ENCODE measurements at regions of chr2 and their contacts with region 1.

Region 1: DNA sequence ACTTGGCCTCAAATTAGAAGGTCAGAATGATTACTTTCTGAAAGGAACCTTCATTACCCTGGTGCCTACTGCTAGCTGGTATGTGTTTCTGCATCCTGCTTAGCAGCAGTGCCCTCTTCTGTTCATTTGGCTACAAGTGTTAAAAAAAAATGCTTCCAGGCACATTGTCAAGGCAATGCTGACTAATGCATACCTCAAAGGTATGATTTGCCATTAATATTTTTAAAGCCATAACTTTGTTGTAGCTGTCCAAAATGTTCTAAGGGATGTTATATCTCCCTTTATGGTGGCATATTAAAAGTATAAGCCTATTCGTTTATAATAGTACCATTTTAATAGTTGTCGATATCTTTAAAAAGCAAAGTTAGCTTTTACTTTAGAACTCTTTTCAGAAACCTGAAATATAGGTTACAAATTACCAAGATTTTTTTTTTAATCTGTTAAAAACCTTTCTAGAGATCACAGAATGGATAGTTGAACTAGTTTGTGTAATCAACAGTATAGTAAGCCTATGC is 52.0 kb upstream of the FAM171B start:
- DNase-seq: no peak
- ATAC-seq: peak; percentile 83 to 86
- H3K4me3 ChIP-seq: no peak overlapping the region
- H3K27ac ChIP-seq: no peak overlapping the region
- H3K4me1 ChIP-seq: no peaks in the 10 kb centered on the region
- H3K27me3 ChIP-seq: no peaks in the 10 kb centered on the region

Region 2: DNA sequence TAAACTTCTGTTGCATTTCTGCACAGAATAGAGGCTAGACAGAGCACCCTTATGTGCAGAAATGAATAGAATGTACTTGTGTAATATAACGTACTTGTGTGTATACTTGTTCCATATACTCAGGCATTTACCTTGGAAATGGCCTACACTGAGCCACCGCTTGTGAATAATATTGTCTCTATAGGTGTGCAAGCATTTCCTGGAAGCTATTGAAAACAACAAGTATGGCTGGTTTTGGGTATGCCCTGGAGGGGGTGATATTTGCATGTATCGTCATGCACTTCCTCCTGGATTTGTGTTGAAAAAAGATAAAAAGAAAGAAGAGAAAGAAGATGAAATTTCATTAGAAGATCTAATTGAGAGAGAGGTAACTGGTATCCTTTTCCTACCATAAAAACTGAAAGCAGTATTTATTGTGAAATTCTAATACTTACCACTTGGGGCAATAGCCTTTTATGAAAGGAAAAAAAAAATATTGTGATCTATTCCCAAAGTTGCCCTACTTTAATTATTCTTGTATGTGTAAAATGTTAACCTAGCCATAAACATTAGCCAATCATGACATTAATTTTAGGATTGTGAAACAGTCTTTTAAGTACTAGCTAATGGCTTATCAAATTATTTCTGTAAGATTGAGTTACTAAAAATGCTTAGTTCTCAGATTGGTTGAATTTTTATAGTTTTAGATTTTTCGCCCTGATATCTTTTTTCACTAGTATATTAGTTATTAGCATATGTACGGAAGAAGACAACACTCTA is 137.8 kb before region 1 on chr2:
- intact Hi-C with region 1: loop called (anchors 2 to 5 kb)
- DNase-seq: no peak
- ATAC-seq: no peak
- H3K4me3 ChIP-seq: no peak overlapping the region
- H3K27ac ChIP-seq: no peak overlapping the region
- H3K4me1 ChIP-seq: no peaks in the 10 kb centered on the region
- H3K27me3 ChIP-seq: no peaks in the 10 kb centered on the region

Measured in right cardiac atrium (tissue), 5 donors.